ENCODE measurements at regions of chr2 and their contacts with region 1.

Region 1: DNA sequence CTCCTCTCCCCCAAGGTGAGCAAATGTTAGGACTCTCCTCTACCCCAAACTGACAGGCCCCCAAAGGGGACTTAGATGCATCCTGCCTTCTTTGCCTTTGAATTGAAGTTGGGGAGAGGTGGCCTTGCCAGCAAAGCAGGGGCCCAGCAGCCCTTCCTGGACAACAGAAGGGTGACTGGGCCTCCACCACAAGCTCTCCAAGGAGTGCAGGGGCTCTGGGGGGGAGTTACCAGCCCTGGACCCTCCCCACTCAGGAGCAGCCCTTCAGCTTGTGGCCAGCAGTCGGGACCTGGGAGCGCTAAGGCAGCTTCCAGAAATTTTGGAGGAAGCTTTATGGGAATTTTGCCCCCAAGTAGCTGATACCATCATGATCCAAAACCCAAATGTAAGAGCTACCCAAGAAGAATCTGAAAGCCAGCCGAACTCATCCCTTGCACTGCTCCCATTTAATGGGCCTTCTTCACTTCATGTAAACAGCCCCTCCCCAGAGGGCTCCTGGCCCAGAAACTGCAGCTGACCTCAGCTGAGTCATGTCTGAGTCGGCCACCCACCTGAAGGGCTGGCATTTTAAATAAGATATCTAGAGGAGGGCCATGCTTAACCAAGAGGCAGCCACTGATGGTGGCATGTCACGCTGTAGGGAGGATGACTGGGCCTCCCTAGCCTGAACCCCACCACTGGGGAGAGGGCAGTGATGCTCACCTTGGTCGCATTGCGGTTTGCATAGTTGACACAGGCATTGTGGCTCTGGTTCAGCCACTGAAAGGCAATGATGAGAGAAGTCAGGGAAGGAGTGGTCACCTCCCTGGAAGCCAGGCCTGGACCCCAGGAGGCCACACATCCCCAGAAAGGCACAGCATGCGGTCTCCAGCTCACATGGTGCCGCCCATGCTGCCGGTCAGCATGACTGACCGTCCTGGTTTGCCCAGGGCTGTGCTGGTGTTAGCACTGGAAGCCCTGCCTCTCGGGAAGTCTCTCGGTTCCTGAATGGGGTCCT is 71.5 kb downstream of the SFXN5 start:
- DNase-seq: peak in 1 of 2 donors; percentile 30
- ATAC-seq: no peak
- H3K4me3 ChIP-seq: no peak overlapping the region
- H3K27ac ChIP-seq: no peak overlapping the region
- H3K4me1 ChIP-seq: no peaks in the 10 kb centered on the region
- H3K27me3 ChIP-seq: no peaks in the 10 kb centered on the region
- CTCF ChIP-seq: no peak

Region 2: GRCh38 chr2:73043929-73044832 is 44.2 kb after region 1 on chr2:
- intact Hi-C with region 1: loop called in 1 of 2 experiments (anchors 5 kb)
- DNase-seq: no peak
- ATAC-seq: no peak
- H3K4me3 ChIP-seq: no peak overlapping the region
- H3K27ac ChIP-seq: no peak overlapping the region
- H3K4me1 ChIP-seq: no peaks in the 10 kb centered on the region
- H3K27me3 ChIP-seq: no peaks in the 10 kb centered on the region
- CTCF ChIP-seq: no peak

Region 3: GRCh38 chr2:73085691-73086360 is 85.8 kb after region 1 on chr2:
- intact Hi-C with region 1: loop called in 1 of 2 experiments (anchors 5 kb)
- DNase-seq: peak; percentile 84 to 91
- ATAC-seq: peak; percentile 82 to 94 (median 86)
- H3K4me3 ChIP-seq: no peak overlapping the region
- H3K27ac ChIP-seq: no peak overlapping the region
- H3K4me1 ChIP-seq: no peaks in the 10 kb centered on the region
- H3K27me3 ChIP-seq: no peaks in the 10 kb centered on the region
- CTCF ChIP-seq: peak; percentile 95

Region 4: GRCh38 chr2:73339201-73339600 is 339.2 kb after region 1 on chr2:
- intact Hi-C with region 1: no loop called
- DNase-seq: no peak
- ATAC-seq: no peak
- H3K4me3 ChIP-seq: no peak overlapping the region
- H3K27ac ChIP-seq: no peak overlapping the region
- H3K4me1 ChIP-seq: no peaks in the 10 kb centered on the region
- H3K27me3 ChIP-seq: peaks cover 0 to 2% (median 0%) of the 10 kb centered on the region in 3 donors
- CTCF ChIP-seq: no peak

Measured in psoas muscle (tissue), 8 donors.